AG04449 (cell line): ENCODE measurements at regions of chr15 and their contacts with region 1.

Region 1: GRCh38 chr15:48285329-48286214 is 45.7 kb upstream of the DUT start:
- DNase-seq: peak; percentile 38
- H3K4me3 ChIP-seq: no peak overlapping the region
- CTCF ChIP-seq: peak; percentile 51

Region 2: GRCh38 chr15:47987908-47988532 is 297.6 kb before region 1 on chr15:
- CTCF ChIA-PET with region 1: interaction called, 15 read pairs
- POLR2A ChIA-PET with region 1: no interaction called
- DNase-seq: peak; percentile 23
- H3K4me3 ChIP-seq: no peak overlapping the region
- CTCF ChIP-seq: peak; percentile 56

Region 3: DNA sequence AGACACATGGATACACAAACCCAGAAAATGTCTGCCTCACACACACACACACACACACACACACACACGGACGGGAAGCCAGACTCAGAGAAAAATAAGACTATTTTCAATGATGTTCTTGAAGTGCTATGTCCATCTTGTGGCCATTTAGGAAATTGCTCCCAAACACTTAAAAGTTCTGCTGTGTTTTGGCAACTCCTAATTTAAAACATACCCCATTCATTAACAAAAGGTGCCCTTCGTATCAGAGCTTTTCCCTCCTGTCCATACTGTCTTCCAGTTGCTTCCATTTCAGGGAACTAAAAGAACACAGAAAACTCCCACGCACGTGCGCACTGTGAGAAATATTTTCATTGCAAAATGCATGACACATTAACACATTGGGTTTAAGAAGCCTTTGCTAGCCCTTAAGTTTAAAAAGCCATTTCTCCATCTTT is 34.9 kb before region 1 on chr15:
- CTCF ChIA-PET with region 1: interaction called, 10 read pairs
- POLR2A ChIA-PET with region 1: no interaction called
- DNase-seq: peak; percentile 40
- H3K4me3 ChIP-seq: no peak overlapping the region
- CTCF ChIP-seq: peak; percentile 51

Region 4: DNA sequence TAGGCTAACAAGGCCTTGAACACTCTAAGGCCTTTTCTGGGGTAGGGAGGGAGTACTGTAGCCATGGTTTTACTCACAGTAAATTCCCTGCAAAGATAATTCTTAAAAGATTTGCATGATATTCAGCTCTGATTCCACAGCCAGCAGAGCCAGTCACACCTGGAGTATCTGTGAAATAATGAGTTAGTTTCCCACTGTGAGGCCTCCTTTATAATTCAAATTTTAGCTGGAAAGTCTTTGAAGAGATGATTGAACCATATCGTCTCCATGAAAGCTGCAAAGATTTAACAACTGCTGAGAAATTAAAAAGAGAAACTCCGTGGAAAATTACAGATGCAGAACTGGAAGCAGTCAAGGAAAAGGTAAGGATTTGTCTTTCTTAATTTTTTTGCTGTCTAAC is 13.3 kb after region 1 on chr15:
- CTCF ChIA-PET with region 1: interaction called, 28 read pairs
- POLR2A ChIA-PET with region 1: no interaction called
- DNase-seq: no peak
- H3K4me3 ChIP-seq: no peak overlapping the region
- CTCF ChIP-seq: no peak

Region 5: DNA sequence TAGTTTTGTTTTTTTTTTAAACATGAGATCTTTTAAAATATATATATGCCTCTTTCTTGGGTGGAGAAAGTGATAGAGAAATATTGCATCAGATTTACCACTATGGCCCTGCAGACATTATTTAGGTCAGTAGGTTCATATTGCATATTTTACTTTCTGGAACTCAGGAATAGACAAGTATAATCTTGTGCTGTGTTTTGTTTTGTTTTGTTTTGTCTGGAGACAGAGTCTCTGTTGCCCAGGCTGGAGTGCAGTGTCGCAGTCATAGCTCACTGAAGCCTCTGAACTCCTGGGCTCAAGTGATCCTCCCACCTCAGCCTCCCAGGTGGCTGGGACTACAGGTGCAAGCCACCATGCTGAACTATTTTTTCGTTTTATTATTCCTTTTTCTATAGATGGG is 24.2 kb after region 1 on chr15:
- CTCF ChIA-PET with region 1: interaction called, 16 read pairs
- POLR2A ChIA-PET with region 1: no interaction called
- DNase-seq: no peak
- H3K4me3 ChIP-seq: no peak overlapping the region
- CTCF ChIP-seq: no peak